H1 (cell line): ENCODE measurements at regions of chr13 and their contacts with region 1.

Region 1: DNA sequence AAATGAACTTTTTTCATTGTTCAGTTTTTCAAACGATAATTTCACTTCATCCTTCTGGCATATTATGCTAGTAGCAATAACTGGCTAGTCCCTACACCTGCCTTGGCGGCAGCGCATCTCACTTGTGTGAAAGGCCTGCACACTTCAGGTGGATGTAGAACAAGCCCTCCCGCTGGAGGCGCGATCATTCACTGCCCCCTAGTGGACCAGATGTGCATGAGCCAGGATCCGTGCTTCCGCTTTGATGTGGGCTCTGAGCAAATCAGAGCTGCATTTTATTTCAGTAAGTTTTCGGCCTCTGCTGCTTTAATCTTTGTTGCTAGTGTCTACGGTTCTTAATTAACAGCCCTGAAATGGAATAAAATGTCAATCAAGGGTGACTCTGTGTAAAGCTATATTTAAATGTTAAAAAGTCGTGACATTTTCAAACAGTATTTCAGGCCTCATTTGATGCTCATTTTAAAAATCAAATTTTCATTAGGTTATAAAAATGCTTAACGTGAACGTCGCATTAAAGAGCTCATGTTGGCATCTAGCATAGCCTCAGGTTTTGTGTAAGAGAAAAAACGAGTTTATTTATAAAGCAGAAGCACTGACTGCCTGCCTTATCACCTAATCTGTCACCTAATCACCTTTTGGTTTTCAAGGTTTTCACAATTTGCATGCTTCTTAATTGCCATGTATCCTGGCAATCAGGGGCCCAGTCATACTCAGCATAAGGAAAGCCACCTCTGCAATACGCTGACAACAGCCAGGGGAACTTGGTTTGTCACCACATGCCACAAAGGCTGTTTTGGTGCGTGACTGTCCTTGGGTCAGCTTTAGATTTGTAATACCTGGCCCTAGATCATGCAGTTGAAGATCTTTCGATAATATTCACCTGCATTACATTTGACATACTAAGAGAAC is 112.2 kb downstream of the TEX26 start:
- DNase-seq: peak; percentile 72 to 87
- H3K4me3 ChIP-seq: peak overlapping the region in 1 of 4 experiments; percentile 35; a peak in 2 of 8 replicates
- H3K27ac ChIP-seq: no peak overlapping the region
- H3K4me1 ChIP-seq: peaks cover 0 to 4% (median 0%) of the 10 kb centered on the region in 4 experiments; a peak in 2 of 7 replicates
- H3K27me3 ChIP-seq: no peaks in the 10 kb centered on the region
- CTCF ChIP-seq: peak; percentile 96 to 97 (median 96)
- EP300 ChIP-seq: no peak
- POLR2A ChIP-seq: no peak
- RAD21 ChIP-seq: peak; percentile 94 to 97

Region 2: DNA sequence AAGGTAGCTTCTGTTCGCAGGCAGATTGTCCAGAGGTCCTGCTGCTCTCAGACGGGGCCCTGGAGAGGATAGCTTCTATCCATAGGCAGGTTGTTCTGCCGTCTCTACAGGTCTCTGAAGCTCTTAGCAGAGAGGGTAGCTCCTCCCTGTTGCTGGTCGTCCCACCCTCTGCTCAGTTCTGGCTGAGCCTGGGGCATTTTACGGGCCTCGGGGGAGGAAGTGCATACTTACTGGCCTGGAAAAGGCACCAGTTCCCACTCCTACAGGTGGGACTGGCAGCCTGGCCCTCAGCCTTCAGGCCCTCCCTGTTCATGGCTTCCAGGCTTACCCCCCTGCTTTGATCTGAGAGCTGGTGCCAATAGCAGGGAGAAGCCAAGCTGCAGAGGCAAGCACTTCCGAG is 384.7 kb before region 1 on chr13:
- CTCF ChIA-PET with region 1: interaction called, 10 read pairs
- POLR2A ChIA-PET with region 1: no interaction called
- DNase-seq: no peak
- H3K4me3 ChIP-seq: no peak overlapping the region
- H3K27ac ChIP-seq: no peak overlapping the region
- H3K4me1 ChIP-seq: peaks cover 0 to 6% (median 1%) of the 10 kb centered on the region in 4 experiments; a peak in 3 of 7 replicates
- H3K27me3 ChIP-seq: no peaks in the 10 kb centered on the region
- CTCF ChIP-seq: no peak
- EP300 ChIP-seq: no peak
- POLR2A ChIP-seq: no peak
- RAD21 ChIP-seq: no peak

Region 3: DNA sequence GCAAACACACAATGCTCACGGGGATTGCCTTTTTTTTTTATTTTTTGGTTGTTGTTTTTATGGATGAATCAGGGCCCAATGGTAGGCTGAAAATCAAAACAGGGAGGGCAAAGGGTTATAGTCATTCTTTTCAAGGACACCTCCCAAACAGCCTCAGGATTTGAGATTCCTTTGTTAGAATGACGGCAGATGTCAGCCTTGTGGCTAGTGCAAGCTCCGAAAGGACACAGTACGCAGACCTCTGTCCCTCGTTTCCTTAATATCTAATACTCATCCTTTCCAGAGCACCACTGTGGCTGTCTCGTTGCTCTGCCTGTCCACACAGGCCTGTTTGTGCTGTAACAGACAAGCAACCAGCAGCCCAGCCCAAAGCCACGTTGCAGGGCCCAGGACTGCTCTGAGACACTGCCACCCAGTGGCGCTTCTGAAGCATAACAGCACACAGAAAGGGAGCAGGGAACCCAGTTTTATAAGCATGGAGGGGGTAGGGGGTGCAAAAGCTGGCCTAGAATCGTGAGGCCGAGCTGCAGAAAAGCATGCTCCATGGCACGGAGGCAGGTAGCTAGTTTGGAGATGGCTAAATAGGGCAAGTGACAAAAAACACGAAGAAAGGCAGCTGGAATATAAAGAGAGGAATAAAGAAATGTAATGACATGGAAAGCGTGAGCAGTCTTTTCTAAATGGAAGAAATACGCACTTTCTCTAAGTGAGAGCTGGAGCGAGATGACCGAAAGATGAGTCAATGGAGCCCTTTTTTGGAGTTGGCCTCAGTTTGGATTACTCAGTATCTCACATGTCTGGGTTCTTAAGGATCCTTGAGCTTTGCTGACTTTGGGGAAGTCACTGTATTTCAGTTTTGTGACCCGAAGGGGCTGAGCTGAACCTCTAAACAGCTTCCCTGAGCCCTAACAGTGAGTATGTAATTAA is 179.2 kb before region 1 on chr13:
- CTCF ChIA-PET with region 1: interaction called, 19 read pairs
- POLR2A ChIA-PET with region 1: no interaction called
- DNase-seq: peak; percentile 70 to 72
- H3K4me3 ChIP-seq: peak overlapping the region in 1 of 4 experiments; percentile 56; a peak in 3 of 8 replicates
- H3K27ac ChIP-seq: no peak overlapping the region
- H3K4me1 ChIP-seq: peaks cover 12 to 31% (median 15%) of the 10 kb centered on the region in 4 experiments
- H3K27me3 ChIP-seq: peaks cover 0 to 7% (median 3%) of the 10 kb centered on the region in 4 experiments; a peak in 4 of 7 replicates
- CTCF ChIP-seq: peak; percentile 88 to 94 (median 93)
- EP300 ChIP-seq: no peak
- POLR2A ChIP-seq: peak in 1 of 2 experiments; percentile 54; a peak in 1 of 3 replicates
- RAD21 ChIP-seq: peak; percentile 91 to 95

Region 4: GRCh38 chr13:30978981-30979956 is 65.4 kb before region 1 on chr13:
- CTCF ChIA-PET with region 1: interaction called, 39 read pairs
- POLR2A ChIA-PET with region 1: interaction called, 4 read pairs
- DNase-seq: peak; percentile 85 to 92
- H3K4me3 ChIP-seq: no peak overlapping the region
- H3K27ac ChIP-seq: no peak overlapping the region
- H3K4me1 ChIP-seq: peaks cover 0 to 3% (median 0%) of the 10 kb centered on the region in 4 experiments; a peak in 1 of 7 replicates
- H3K27me3 ChIP-seq: no peaks in the 10 kb centered on the region
- CTCF ChIP-seq: peak; percentile 89 to 97 (median 95)
- EP300 ChIP-seq: no peak
- POLR2A ChIP-seq: no peak
- RAD21 ChIP-seq: peak; percentile 79 to 92

Region 5: DNA sequence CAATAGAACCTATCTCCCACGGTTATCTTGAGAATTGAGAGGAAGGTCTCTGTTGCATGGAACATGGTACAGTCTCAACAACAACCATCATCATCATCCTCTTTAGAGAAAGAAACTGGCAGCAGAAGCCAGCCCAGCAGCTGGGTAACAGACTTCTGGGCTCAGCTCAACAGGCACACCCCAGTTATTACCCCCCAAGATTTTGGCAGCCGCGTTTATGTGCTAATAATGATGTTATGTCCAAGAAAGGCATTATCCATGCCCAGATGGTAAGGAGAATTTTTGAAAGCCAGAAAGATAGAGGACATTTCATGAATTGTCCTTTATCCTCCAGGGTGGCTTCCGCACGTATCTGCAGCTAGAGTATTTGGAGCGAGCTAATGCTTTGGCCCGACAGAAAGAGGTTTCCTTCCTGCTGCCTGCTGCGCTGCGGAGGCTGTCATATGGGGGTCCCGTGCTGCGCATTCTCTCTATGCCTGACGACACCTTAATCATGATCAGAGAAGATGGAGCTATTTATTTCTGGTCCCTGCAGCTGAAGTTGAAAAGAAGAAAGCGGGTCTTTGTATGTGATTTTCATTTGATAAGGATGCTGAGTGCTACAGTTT is 22.2 kb before region 1 on chr13:
- CTCF ChIA-PET with region 1: interaction called, 11 read pairs
- POLR2A ChIA-PET with region 1: no interaction called
- DNase-seq: no peak
- H3K4me3 ChIP-seq: no peak overlapping the region
- H3K27ac ChIP-seq: no peak overlapping the region
- H3K4me1 ChIP-seq: no peaks in the 10 kb centered on the region
- H3K27me3 ChIP-seq: no peaks in the 10 kb centered on the region
- CTCF ChIP-seq: no peak
- EP300 ChIP-seq: no peak
- POLR2A ChIP-seq: no peak
- RAD21 ChIP-seq: no peak

Region 6: GRCh38 chr13:31056644-31057271 is 12.1 kb after region 1 on chr13:
- CTCF ChIA-PET with region 1: interaction called, 13 read pairs
- POLR2A ChIA-PET with region 1: interaction called, 3 read pairs
- DNase-seq: no peak
- H3K4me3 ChIP-seq: no peak overlapping the region
- H3K27ac ChIP-seq: no peak overlapping the region
- H3K4me1 ChIP-seq: no peaks in the 10 kb centered on the region
- H3K27me3 ChIP-seq: no peaks in the 10 kb centered on the region; a peak in 1 of 7 replicates
- CTCF ChIP-seq: no peak
- EP300 ChIP-seq: no peak
- POLR2A ChIP-seq: no peak
- RAD21 ChIP-seq: no peak